Colonic mucosa (tissue), 4 donors: ENCODE measurements at regions of chr2 and their contacts with region 1.

Region 1: DNA sequence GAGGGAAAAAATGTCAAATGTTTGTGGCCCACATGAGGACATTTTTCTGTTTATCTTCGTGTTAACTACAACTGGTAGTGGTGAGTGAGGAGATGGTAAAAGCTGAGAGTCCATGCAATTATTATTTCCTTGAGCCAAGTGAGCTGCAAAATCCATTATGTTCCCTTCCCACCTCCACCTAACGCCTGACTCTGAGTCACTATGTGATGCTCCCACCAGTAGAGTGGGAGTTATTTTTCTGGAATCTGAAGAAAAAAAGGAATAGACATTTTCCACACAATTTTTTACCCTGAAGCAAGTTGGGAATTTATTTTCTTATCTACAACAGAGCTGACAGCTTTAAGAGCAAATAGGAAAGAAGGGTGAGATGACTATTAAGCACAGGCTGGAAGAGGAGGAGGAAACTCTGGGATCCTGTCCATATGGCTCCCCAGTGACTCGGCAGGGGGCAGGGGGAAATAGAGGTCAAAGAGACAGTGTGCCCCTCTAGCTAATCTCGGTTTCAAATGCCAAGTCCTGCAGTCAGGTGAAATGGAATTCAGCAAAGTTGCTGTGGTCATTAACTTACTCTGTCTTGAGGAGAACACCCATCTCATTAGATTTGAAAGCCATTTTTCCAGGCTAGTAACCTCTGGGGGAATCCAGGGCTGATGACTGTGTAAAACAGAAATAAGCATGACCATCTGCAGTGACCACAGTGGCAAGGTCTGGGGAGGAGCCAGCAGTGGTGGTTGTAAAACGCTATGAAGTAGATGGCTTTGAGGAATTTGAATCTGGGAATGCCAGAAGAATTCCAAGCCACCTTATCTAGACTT is 463.9 kb downstream of the STK39 start:
- DNase-seq: no peak
- H3K4me3 ChIP-seq: no peak overlapping the region
- H3K27ac ChIP-seq: no peak overlapping the region
- H3K4me1 ChIP-seq: no peaks in the 10 kb centered on the region
- H3K27me3 ChIP-seq: no peaks in the 10 kb centered on the region
- CTCF ChIP-seq: no peak

Region 2: GRCh38 chr2:167844714-167845530 is 61.5 kb after region 1 on chr2:
- intact Hi-C with region 1: loop called (anchors 2 kb)
- DNase-seq: peak; percentile 47
- H3K4me3 ChIP-seq: no peak overlapping the region
- H3K27ac ChIP-seq: no peak overlapping the region
- H3K4me1 ChIP-seq: no peaks in the 10 kb centered on the region
- H3K27me3 ChIP-seq: no peaks in the 10 kb centered on the region
- CTCF ChIP-seq: peak; percentile 12

Region 3: GRCh38 chr2:167908786-167909185 is 125.3 kb after region 1 on chr2:
- intact Hi-C with region 1: no loop called
- DNase-seq: no peak
- H3K4me3 ChIP-seq: no peak overlapping the region
- H3K27ac ChIP-seq: no peak overlapping the region
- H3K4me1 ChIP-seq: no peaks in the 10 kb centered on the region
- H3K27me3 ChIP-seq: no peaks in the 10 kb centered on the region
- CTCF ChIP-seq: no peak

Region 4: GRCh38 chr2:168060986-168061750 is 277.7 kb after region 1 on chr2:
- intact Hi-C with region 1: no loop called
- DNase-seq: no peak
- H3K4me3 ChIP-seq: no peak overlapping the region
- H3K27ac ChIP-seq: no peak overlapping the region
- H3K4me1 ChIP-seq: no peaks in the 10 kb centered on the region
- H3K27me3 ChIP-seq: no peaks in the 10 kb centered on the region
- CTCF ChIP-seq: no peak